ENCODE measurements at regions of chr17 and their contacts with region 1.

Region 1: DNA sequence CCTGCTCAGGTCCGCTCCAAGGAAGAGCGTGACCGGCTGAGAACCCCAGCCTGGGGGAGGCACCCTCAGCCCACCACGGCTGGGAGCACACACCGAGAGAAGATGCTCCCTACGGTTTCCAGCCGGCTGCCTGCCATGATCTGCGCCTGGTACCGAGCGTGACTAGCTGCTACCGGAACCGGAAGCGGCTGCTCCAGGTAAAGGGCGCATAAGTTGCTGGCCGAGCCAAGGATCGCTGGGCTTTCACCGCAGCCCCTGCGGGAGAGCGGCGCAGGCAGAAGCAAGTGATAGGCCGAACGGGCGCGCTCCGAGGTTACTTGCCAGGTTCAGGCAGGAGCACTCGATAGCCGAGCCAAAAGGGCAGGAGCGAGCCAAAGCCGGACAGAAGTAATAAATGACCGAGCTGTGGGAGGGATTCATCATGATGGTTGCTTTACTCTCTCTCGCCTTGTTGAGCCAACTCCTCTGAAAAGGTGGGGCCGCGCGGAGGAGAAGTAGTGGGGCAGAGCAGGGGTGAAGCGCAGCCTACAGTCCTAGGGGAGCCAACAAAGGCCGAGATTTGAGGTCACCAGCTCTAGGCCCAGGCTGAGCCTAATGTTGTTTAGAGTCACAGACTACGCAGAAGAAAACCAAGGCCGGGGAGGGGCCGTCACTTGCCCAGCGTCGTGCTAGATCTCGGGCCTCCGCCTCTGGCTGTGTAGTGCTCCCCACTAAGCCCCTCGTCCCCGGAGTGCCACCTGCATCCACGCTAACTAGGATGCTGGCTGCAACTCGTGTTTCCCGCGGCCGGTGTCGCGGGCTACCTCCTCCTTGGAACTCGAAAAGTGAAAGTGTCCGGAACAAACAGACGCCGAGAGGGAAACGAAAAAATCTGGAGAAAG is at the start of gene MRPS23:
- DNase-seq: peak; percentile 88 to 99
- H3K4me3 ChIP-seq: peak within 1 kb of the TSS; percentile 67 to 97
- H3K27ac ChIP-seq: peak within 1 kb of the TSS; percentile 88 to 96
- H3K4me1 ChIP-seq: peaks cover 15 to 41% of the 10 kb centered on the region in 2 donors
- H3K27me3 ChIP-seq: no peaks in the 10 kb centered on the region
- CTCF ChIP-seq: no peak
- total RNA-seq, gene MRPS23: 2.0 TPM

Region 2: DNA sequence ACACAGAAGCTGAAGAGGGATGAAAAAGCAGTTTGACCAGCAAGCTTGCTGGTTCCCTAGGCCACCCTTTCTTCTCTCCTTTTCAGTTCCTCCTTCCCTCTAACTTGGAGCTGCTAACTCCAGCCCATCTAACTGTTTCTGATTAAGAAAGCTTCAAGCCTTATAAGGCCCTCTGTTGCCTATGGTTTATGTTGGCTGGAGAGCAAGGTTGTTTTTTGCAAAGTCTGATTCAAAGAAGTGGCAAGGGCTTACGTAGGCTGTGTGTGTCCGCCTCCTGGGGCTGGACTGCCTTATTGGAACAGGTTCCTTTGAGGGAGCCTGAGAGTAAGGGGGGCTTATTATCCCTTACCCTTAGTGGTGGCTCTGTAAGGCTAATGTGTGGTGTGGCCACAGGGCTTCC is 757.9 kb before region 1 on chr17:
- intact Hi-C with region 1: loop called (anchors 5 kb)
- DNase-seq: peak; percentile 61 to 91
- H3K4me3 ChIP-seq: peak overlapping the region in 1 of 2 donors; percentile 46
- H3K27ac ChIP-seq: peak overlapping the region; percentile 98
- H3K4me1 ChIP-seq: peaks cover 18 to 63% of the 10 kb centered on the region in 2 donors
- H3K27me3 ChIP-seq: no peaks in the 10 kb centered on the region
- CTCF ChIP-seq: no peak

Region 3: DNA sequence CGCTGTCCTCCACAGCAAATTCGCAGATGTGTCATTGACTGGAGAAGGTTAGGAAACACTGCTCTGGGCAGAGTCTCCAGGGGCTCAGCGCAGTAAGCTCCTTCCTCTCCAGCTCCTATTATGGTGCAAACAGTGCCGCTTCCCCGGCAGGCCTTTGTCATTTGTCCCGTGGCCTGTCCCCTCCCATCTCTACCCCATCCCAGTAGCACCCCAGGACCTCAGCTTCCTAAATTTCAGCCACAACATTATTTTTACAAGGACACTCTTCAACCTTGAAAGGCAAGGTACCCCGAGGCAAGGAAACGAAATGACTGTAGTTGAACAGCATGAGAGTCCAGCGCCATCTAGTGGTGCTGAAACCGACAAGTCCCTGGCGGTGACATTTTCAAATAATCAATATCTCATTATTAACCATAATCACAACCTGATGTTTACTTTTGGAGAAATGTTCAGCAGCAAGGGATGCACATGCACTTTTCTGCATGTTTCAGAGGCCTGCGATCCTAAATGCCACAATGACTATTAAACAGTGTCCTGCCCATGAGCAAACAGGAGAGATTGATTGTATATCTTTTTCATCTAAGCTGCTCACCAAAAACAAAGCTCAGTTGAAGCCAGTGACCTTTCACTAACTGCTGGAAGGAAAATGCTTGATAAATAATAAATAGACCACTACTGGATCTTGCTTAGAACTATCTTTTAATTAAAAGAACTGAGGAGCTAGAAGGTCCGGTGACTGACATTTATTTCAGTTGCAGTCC is 16.8 kb before region 1 on chr17:
- intact Hi-C with region 1: loop called (anchors 1 kb)
- DNase-seq: peak in 1 of 2 donors; percentile 85
- H3K4me3 ChIP-seq: peak overlapping the region; percentile 51 to 60
- H3K27ac ChIP-seq: peak overlapping the region; percentile 83 to 88
- H3K4me1 ChIP-seq: peaks cover 10 to 19% of the 10 kb centered on the region in 2 donors
- H3K27me3 ChIP-seq: no peaks in the 10 kb centered on the region
- CTCF ChIP-seq: peak; percentile 86 to 93 (median 92)

Region 4: DNA sequence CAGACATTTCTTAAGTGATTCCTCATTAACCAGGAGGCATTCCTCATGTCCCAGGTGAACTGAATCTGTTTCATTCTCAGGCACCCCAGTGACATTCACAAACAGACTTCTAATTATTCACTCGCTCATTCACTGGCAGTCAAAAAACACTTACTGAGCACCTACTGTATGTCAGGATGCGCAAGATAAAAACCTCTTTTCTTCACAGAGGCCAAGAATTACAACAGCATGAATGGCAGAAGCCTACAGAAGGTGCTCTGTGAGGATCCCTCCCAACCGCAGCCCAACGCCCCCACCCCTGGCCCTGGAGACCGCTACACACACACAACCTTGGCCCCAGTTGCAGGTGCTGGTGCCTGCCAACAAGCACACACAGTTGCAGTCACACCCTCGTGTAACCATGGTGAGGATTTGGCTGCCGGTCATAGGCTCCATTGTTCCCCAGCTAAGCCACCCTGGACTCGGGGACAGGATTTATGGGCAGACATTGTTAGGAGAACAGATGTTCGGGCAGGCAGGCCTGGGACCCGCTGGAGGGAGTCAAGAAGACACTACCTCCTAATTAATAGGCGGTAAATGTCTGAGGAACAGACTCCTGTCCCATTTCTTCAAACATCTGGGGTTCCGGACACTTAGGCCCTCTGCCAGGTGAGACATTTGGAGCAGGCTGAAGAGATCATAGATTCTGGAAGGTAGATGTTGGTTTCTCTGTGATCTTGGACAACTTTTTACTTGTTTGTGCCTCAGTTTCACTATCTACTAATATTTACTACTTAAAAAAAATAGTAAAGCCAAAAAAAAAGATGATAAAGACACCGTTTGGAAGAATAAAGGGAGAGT is 61.9 kb after region 1 on chr17:
- intact Hi-C with region 1: no loop called
- DNase-seq: peak; percentile 41 to 88
- H3K4me3 ChIP-seq: no peak overlapping the region
- H3K27ac ChIP-seq: peak overlapping the region in 1 of 2 donors; percentile 3
- H3K4me1 ChIP-seq: peaks cover 0 to 46% of the 10 kb centered on the region in 2 donors
- H3K27me3 ChIP-seq: no peaks in the 10 kb centered on the region
- CTCF ChIP-seq: no peak

Region 5: GRCh38 chr17:58082870-58083490 is 232.9 kb after region 1 on chr17 and contains the start of gene DYNLL2:
- intact Hi-C with region 1: loop called (anchors 5 kb)
- DNase-seq: peak; percentile 65 to 96
- H3K4me3 ChIP-seq: peak within 1 kb of the TSS; percentile 66 to 76
- H3K27ac ChIP-seq: peak within 1 kb of the TSS; percentile 90 to 92
- H3K4me1 ChIP-seq: peaks cover 6 to 27% of the 10 kb centered on the region in 2 donors
- H3K27me3 ChIP-seq: no peaks in the 10 kb centered on the region
- CTCF ChIP-seq: no peak
- total RNA-seq, gene DYNLL2: 15.3 TPM

Region 6: DNA sequence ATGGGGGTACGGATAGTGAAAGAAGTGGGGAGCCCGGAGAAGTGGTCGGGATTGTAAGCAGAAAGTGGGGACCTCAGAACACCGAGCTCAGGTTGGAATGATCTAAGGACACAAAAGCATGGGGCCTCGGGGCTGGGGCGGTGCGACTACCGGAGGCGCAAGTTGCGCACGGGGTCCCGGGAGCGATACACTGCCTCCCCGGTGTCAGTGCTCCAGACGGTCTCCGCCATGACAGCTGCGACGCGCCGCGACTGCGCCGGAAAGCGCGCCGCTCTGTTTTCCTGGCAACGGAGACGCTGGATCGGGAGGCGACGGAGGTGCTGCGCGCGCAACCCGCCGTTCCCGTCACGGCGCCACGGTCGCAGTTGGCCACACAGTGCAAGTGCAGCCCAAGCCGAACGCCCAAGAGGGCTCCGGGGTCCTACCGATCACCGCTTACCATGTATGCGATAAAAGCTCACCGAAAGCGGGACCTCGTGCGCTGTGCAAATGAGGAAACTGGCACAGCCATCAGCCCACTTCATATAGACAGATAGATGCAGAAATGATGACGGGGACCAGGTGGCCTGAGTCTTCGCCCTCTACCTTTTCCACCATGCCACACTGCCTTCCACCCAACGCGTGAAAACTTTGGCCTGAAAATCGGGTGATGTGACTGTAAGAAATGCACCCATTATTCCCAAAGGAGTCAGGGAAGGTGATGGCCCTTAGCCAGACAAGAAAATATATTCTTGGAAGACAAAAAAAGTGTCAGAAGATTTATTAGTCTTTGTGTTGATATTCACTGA is 369.1 kb after region 1 on chr17 and contains the start of gene MKS1:
- intact Hi-C with region 1: loop called (anchors 1 kb)
- DNase-seq: peak; percentile 70 to 97
- H3K4me3 ChIP-seq: peak within 1 kb of the TSS; percentile 58 to 65
- H3K27ac ChIP-seq: peak within 1 kb of the TSS; percentile 56 to 67
- H3K4me1 ChIP-seq: no peaks in the 10 kb centered on the region
- H3K27me3 ChIP-seq: no peaks in the 10 kb centered on the region
- CTCF ChIP-seq: peak; percentile 56 to 79 (median 75)
- total RNA-seq, gene MKS1: 1.5 TPM